Mammary epithelial cell (primary cell): ENCODE measurements at regions of chr1 and their contacts with region 1.

Region 1: DNA sequence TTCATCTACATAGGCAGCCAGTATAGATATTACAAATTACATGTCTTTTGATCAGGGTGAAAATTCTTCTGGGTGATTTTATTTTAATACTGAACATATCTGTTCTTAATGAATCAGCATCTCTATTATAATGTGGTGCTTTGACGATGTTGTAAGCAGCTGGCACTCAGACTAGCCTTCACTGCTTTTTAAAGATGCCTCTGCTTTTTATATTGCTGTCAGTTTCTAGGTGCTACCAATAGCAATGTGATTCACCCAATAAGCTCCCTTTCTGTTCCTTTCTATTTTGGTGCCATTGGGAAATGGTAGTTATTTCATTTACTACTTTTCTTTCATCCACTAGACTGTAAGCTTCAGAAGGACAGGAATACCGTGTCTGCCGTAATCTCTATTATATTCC is 11.1 kb upstream of the ANGPTL1 start:
- DNase-seq: no peak
- H3K4me3 ChIP-seq: no peak overlapping the region
- H3K27ac ChIP-seq: no peak overlapping the region
- H3K4me1 ChIP-seq: no peaks in the 10 kb centered on the region
- H3K27me3 ChIP-seq: no peaks in the 10 kb centered on the region
- CTCF ChIP-seq: no peak

Region 2: GRCh38 chr1:178693366-178693765 is 188.6 kb before region 1 on chr1:
- CTCF ChIA-PET with region 1: no interaction called
- dilution Hi-C with region 1: loop called (anchors 5 kb)
- in situ Hi-C with region 1: no loop called
- intact Hi-C with region 1: no loop called
- DNase-seq: no peak
- H3K4me3 ChIP-seq: no peak overlapping the region
- H3K27ac ChIP-seq: no peak overlapping the region
- H3K4me1 ChIP-seq: no peaks in the 10 kb centered on the region
- H3K27me3 ChIP-seq: no peaks in the 10 kb centered on the region
- CTCF ChIP-seq: peak in 1 of 2 donors; percentile 5

Region 3: DNA sequence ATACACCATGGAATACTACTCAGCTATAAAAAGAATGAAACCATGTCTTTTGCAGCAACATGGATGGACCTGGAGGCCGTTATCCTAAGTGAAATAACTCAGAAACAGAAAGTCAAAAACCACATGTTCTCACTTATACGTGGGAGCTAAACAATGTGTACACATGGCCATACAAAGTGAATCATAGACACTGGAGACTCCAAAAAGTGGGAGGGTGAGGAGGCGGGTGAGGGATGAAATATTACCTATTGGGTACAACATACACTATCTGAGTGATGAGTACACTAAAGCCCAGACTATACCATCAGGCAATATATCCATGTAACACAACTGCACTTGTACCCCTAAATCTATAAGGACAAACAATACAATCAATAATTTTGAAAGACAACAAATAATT is 104.3 kb after region 1 on chr1:
- CTCF ChIA-PET with region 1: no interaction called
- dilution Hi-C with region 1: no loop called
- in situ Hi-C with region 1: no loop called
- intact Hi-C with region 1: no loop called
- DNase-seq: no peak
- H3K4me3 ChIP-seq: no peak overlapping the region
- H3K27ac ChIP-seq: no peak overlapping the region
- H3K4me1 ChIP-seq: no peaks in the 10 kb centered on the region
- H3K27me3 ChIP-seq: no peaks in the 10 kb centered on the region
- CTCF ChIP-seq: no peak

Region 4: GRCh38 chr1:179794669-179795068 is 912.7 kb after region 1 on chr1:
- CTCF ChIA-PET with region 1: no interaction called
- dilution Hi-C with region 1: no loop called
- in situ Hi-C with region 1: no loop called
- intact Hi-C with region 1: no loop called
- DNase-seq: no peak
- H3K4me3 ChIP-seq: no peak overlapping the region
- H3K27ac ChIP-seq: no peak overlapping the region
- H3K4me1 ChIP-seq: no peaks in the 10 kb centered on the region
- H3K27me3 ChIP-seq: no peaks in the 10 kb centered on the region
- CTCF ChIP-seq: no peak